Common myeloid progenitor, CD34-positive (primary cell): ENCODE measurements at regions of chr9 and their contacts with region 1.

Region 1: GRCh38 chr9:136644598-136645351 is 17.9 kb upstream of the EGFL7 start:
- DNase-seq: peak in 2 of 3 donors; percentile 70 to 78
- H3K4me3 ChIP-seq: peak overlapping the region in 5 of 7 experiments; percentile 19 to 65 (median 57)
- H3K27ac ChIP-seq: peak overlapping the region; percentile 40 to 82
- H3K4me1 ChIP-seq: peaks cover 3 to 72% (median 67%) of the 10 kb centered on the region in 4 experiments
- H3K27me3 ChIP-seq: no peaks in the 10 kb centered on the region

Region 2: DNA sequence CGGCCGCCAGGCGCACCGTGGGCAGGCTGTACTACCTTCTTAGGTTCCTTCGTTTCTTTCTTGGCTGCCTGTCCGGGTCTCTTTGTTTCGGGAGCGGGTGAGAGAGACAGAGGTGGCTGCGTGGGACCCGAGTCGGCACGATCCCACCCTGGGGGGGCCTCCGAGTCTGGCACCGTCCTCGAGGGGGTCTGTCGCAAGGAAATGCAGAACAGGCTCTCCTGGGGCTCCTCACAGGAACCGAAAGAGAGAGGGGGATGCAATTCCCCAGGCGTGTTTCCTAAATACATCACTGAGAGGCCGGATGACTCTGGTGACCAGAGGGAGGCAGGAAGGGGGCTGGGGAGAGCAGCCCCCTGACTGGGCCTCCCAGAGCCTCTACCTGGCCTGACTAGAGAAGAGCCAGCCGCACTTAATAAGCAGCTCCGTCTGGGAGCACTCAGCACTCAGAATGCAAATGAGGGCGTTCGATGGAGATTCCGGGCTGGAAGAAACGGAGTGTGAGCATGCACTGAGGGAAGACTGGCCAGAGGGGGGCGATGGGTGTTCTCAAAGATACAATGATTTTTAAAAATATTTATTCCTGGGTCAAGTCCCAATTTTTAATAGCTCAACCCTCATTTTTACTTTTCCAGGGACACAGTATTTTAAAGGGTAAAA is 193.4 kb before region 1 on chr9:
- CTCF ChIA-PET with region 1: no interaction called
- POLR2A ChIA-PET with region 1: no interaction called
- DNase-seq: no peak
- H3K4me3 ChIP-seq: no peak overlapping the region
- H3K27ac ChIP-seq: no peak overlapping the region
- H3K4me1 ChIP-seq: no peaks in the 10 kb centered on the region
- H3K27me3 ChIP-seq: no peaks in the 10 kb centered on the region

Region 3: GRCh38 chr9:136533775-136534157 is 111.0 kb before region 1 on chr9:
- CTCF ChIA-PET with region 1: interaction called, 9 read pairs
- POLR2A ChIA-PET with region 1: interaction called, 19 read pairs
- DNase-seq: peak; percentile 78 to 84 (median 82)
- H3K4me3 ChIP-seq: peak overlapping the region in 5 of 7 experiments; percentile 1 to 61 (median 13)
- H3K27ac ChIP-seq: peak overlapping the region; percentile 58 to 83
- H3K4me1 ChIP-seq: peaks cover 2 to 97% (median 94%) of the 10 kb centered on the region in 4 experiments
- H3K27me3 ChIP-seq: no peaks in the 10 kb centered on the region

Region 4: GRCh38 chr9:136665111-136665703 is 20.4 kb after region 1 on chr9:
- CTCF ChIA-PET with region 1: interaction called, 194 read pairs
- POLR2A ChIA-PET with region 1: interaction called, 406 read pairs
- DNase-seq: peak in 2 of 3 donors; percentile 66 to 73
- H3K4me3 ChIP-seq: peak overlapping the region; percentile 49 to 94 (median 88)
- H3K27ac ChIP-seq: peak overlapping the region; percentile 93
- H3K4me1 ChIP-seq: peaks cover 0 to 92% (median 88%) of the 10 kb centered on the region in 4 experiments
- H3K27me3 ChIP-seq: no peaks in the 10 kb centered on the region

Region 5: GRCh38 chr9:136671646-136672430 is 27.1 kb after region 1 on chr9:
- CTCF ChIA-PET with region 1: interaction called, 20 read pairs
- POLR2A ChIA-PET with region 1: interaction called, 14 read pairs
- DNase-seq: peak in 2 of 3 donors; percentile 60 to 65
- H3K4me3 ChIP-seq: no peak overlapping the region
- H3K27ac ChIP-seq: no peak overlapping the region
- H3K4me1 ChIP-seq: peaks cover 0 to 59% (median 44%) of the 10 kb centered on the region in 4 experiments
- H3K27me3 ChIP-seq: no peaks in the 10 kb centered on the region